Activated CD4-positive, alpha-beta memory T cell treated with anti-CD3 and anti-CD28 coated beads for 36 hours (primary cell): ENCODE measurements at regions of chr17 and their contacts with region 1.

Region 1: GRCh38 chr17:2244545-2245525 is 58.8 kb downstream of the SMG6 start:
- DNase-seq: peak; percentile 89
- H3K4me3 Mint-ChIP-seq: no peak overlapping the region
- H3K27ac Mint-ChIP-seq: peak overlapping the region; percentile 8
- H3K4me1 Mint-ChIP-seq: peaks cover 34% of the 10 kb centered on the region
- H3K27me3 Mint-ChIP-seq: no peaks in the 10 kb centered on the region

Region 2: DNA sequence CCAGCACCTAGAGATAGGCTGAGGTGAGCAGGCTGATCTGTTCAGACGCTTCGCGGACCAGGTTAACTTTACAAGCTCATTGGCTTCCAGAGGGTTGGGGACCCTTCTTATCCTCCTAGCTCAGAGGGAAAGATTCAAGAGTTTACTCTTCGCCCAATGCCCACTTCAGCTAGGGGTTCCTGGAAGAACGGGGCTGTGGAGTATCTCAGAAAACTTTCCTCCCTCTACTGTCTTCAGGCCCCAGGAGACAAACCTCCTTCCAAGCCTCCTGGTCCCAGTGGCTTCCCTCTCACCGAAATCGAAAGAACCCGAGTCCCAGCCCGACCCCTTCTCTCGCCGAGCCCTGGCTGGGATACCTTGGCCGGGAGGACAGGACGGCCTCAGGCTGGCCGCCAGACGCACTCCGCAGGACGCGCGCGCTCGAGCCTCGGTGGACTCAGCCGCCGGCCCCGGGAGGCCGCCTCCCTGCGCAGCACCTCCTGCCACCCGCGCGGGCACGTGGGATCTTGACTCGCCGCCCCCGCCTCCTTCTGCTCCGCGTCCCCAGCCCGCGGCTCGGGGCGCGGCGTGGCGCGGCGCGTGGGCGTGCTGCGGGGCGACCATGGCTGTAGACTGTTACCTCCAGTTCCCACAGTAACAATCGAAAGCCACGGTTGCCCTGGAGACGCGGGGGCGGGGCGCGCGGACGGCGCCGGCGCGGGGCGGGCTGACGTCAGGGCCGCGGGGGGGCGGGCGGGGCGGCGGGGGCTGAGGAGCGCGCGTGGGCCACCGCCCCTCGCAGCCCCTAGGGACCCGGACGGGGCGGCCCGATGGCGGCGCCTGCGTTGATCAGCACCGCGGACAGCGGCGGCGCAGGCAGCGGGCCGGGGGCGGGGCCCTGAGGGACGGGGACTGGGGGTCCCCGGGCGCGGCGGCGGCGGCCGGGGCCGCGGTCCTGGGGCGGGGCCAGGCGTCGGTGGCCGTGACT is 195.2 kb before region 1 on chr17:
- CTCF ChIA-PET with region 1: interaction called, 288 read pairs
- POLR2A ChIA-PET with region 1: interaction called, 41 read pairs
- intact Hi-C with region 1: loop called (anchors 1 kb)
- DNase-seq: peak; percentile 92
- H3K4me3 Mint-ChIP-seq: peak overlapping the region; percentile 71
- H3K27ac Mint-ChIP-seq: no peak overlapping the region
- H3K4me1 Mint-ChIP-seq: peaks cover 24% of the 10 kb centered on the region
- H3K27me3 Mint-ChIP-seq: peaks cover 7% of the 10 kb centered on the region

Region 3: DNA sequence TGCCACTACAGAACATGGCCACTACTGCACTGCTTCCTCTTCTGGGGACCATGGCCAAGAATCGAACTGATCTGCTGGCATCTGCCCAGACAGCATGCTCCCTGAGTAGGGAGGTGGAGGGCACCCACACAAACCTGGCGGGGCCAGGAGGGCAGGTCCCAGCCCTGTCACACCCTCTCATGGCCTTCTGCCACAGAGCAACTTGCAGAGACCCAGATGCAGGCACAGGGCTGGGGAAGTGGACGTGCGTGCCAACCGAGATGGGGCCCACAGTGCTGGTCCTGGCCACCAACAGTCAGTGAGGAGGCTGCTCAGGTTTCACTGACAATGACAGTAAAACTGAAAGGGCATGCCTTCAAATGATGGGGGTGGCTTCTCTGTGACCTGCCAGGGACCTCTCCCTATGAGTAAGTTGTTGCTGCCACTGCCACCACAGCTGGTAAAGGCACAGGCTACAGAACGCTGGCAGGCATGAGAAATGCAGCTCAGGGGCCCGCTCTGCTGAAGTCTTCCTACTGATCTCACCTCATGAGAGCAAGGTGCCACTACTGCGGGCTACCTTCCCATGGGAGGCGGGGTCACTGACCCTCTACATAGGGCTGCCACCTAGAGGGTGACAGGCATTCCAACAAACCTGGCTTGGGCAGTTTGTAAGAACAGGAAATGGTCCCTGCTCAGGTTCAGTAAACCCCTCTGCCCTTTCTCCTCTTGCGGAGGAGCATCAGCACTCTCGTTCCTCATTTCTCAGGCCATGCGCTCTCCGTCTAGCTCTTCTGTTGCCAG is 174.4 kb before region 1 on chr17:
- CTCF ChIA-PET with region 1: interaction called, 36 read pairs
- POLR2A ChIA-PET with region 1: interaction called, 3 read pairs
- intact Hi-C with region 1: loop called (anchors 1 kb)
- DNase-seq: peak; percentile 93
- H3K4me3 Mint-ChIP-seq: peak overlapping the region; percentile 60
- H3K27ac Mint-ChIP-seq: peak overlapping the region; percentile 93
- H3K4me1 Mint-ChIP-seq: peaks cover 48% of the 10 kb centered on the region
- H3K27me3 Mint-ChIP-seq: peaks cover 2% of the 10 kb centered on the region

Region 4: GRCh38 chr17:2192367-2193057 is 52.3 kb before region 1 on chr17:
- CTCF ChIA-PET with region 1: interaction called, 19 read pairs
- POLR2A ChIA-PET with region 1: interaction called, 3 read pairs
- intact Hi-C with region 1: loop called (anchors 2 kb)
- DNase-seq: peak; percentile 79
- H3K4me3 Mint-ChIP-seq: no peak overlapping the region
- H3K27ac Mint-ChIP-seq: peak overlapping the region; percentile 68
- H3K4me1 Mint-ChIP-seq: peaks cover 59% of the 10 kb centered on the region
- H3K27me3 Mint-ChIP-seq: no peaks in the 10 kb centered on the region

Region 5: GRCh38 chr17:2259769-2260536 is 15.1 kb after region 1 on chr17:
- CTCF ChIA-PET with region 1: interaction called, 40 read pairs
- POLR2A ChIA-PET with region 1: interaction called, 3 read pairs
- intact Hi-C with region 1: no loop called
- DNase-seq: peak; percentile 90
- H3K4me3 Mint-ChIP-seq: peak overlapping the region; percentile 65
- H3K27ac Mint-ChIP-seq: peak overlapping the region; percentile 93
- H3K4me1 Mint-ChIP-seq: peaks cover 72% of the 10 kb centered on the region
- H3K27me3 Mint-ChIP-seq: no peaks in the 10 kb centered on the region

Region 6: GRCh38 chr17:2282297-2282873 is 37.5 kb after region 1 on chr17:
- CTCF ChIA-PET with region 1: interaction called, 55 read pairs
- POLR2A ChIA-PET with region 1: interaction called, 3 read pairs
- intact Hi-C with region 1: loop called (anchors 5 kb)
- DNase-seq: no peak
- H3K4me3 Mint-ChIP-seq: no peak overlapping the region
- H3K27ac Mint-ChIP-seq: peak overlapping the region; percentile 33
- H3K4me1 Mint-ChIP-seq: peaks cover 12% of the 10 kb centered on the region
- H3K27me3 Mint-ChIP-seq: no peaks in the 10 kb centered on the region

Region 7: GRCh38 chr17:2421315-2422147 is 176.7 kb after region 1 on chr17:
- CTCF ChIA-PET with region 1: no interaction called
- POLR2A ChIA-PET with region 1: no interaction called
- intact Hi-C with region 1: no loop called
- DNase-seq: no peak
- H3K4me3 Mint-ChIP-seq: no peak overlapping the region
- H3K27ac Mint-ChIP-seq: peak overlapping the region; percentile 30
- H3K4me1 Mint-ChIP-seq: peaks cover 3% of the 10 kb centered on the region
- H3K27me3 Mint-ChIP-seq: no peaks in the 10 kb centered on the region